HepG2 (cell line): ENCODE measurements at regions of chr11 and their contacts with region 1.

Region 1: DNA sequence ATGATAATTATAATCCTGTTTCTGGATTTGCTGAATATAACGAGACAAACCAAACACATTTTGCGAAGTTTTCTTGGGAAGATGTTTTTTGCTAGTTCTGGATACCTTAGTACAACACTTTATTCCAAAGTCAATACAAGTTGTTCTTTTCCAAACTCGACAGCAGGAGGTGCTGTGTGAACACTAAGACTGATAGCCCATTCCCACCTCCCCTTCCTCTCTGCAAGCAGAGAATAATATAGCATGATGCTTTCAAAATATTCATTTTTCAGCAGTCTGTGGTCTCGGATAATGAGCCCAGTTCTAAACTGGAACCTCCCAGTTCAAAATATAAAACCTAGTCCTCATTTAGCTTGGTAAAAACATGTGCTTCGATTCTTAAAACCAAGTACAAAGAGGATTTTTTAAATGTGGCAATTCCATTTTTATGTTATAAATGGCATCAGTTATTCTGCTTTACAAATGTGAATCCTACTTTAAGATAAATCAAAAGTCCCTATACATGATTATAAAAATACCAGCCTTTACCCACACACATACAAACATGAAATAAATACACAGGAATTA is 129.1 kb downstream of the DCDC1 start:
- DNase-seq: peak; percentile 59
- ATAC-seq: peak; percentile 85
- H3K4me3 ChIP-seq: no peak overlapping the region
- H3K27ac ChIP-seq: no peak overlapping the region
- H3K4me1 ChIP-seq: no peaks in the 10 kb centered on the region
- H3K27me3 ChIP-seq: no peaks in the 10 kb centered on the region
- CTCF ChIP-seq: peak; percentile 76
- EP300 ChIP-seq: no peak
- POLR2A ChIP-seq: no peak
- RAD21 ChIP-seq: no peak

Region 2: DNA sequence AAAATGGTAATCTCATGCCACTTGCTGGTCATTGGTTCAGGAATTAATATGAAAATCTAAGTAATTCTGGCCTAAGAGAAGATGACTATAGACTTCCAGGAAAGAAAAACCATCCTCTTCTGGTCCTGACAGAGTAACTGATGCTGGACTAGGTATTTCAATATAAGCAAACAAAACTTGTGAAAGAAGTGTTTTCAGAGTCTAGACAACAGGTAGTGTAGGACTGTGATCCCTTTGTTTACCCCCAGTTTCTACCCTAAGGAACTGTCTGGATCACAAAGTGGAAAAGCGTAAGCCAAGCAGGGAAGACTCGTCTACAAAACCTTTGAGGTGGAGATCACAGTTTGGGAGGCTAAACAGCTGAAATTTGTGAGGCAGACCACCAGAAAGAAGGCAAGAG is 947.9 kb before region 1 on chr11:
- CTCF ChIA-PET with region 1: no interaction called
- POLR2A ChIA-PET with region 1: no interaction called
- in situ Hi-C with region 1: no loop called
- intact Hi-C with region 1: loop called (anchors 5 kb)
- DNase-seq: peak; percentile 70
- ATAC-seq: peak; percentile 94
- H3K4me3 ChIP-seq: no peak overlapping the region
- H3K27ac ChIP-seq: no peak overlapping the region
- H3K4me1 ChIP-seq: peaks cover 5% of the 10 kb centered on the region
- H3K27me3 ChIP-seq: no peaks in the 10 kb centered on the region
- CTCF ChIP-seq: no peak
- EP300 ChIP-seq: peak in 1 of 2 experiments; percentile 49; a peak in 2 of 4 replicates
- POLR2A ChIP-seq: no peak
- RAD21 ChIP-seq: no peak

Region 3: DNA sequence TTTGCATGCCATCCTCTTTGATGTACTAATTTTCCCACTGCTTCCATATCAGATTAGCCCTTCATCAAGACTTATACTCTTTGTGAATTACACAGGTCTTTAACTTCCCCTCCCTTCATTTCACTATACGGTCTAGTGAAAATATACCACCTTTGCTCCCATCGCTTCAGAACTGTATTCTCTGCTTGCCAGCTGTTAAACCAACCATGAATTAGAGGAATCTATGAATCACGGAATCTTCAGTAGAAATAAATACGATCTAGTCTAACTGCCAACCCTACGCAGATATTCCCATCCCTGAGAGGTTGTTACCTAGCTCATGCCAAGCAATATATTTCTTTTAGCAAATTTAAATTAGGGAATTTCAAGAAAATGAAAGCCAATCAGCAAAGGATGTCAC is 476.5 kb before region 1 on chr11:
- CTCF ChIA-PET with region 1: no interaction called
- POLR2A ChIA-PET with region 1: no interaction called
- in situ Hi-C with region 1: no loop called
- intact Hi-C with region 1: no loop called
- DNase-seq: no peak
- ATAC-seq: no peak
- H3K4me3 ChIP-seq: no peak overlapping the region
- H3K27ac ChIP-seq: no peak overlapping the region
- H3K4me1 ChIP-seq: no peaks in the 10 kb centered on the region
- H3K27me3 ChIP-seq: no peaks in the 10 kb centered on the region
- CTCF ChIP-seq: no peak
- EP300 ChIP-seq: no peak
- POLR2A ChIP-seq: no peak
- RAD21 ChIP-seq: no peak

Region 4: GRCh38 chr11:31199378-31199777 is 41.0 kb before region 1 on chr11:
- CTCF ChIA-PET with region 1: no interaction called
- POLR2A ChIA-PET with region 1: no interaction called
- in situ Hi-C with region 1: no loop called
- intact Hi-C with region 1: no loop called
- DNase-seq: no peak
- ATAC-seq: no peak
- H3K4me3 ChIP-seq: no peak overlapping the region
- H3K27ac ChIP-seq: no peak overlapping the region
- H3K4me1 ChIP-seq: no peaks in the 10 kb centered on the region
- H3K27me3 ChIP-seq: no peaks in the 10 kb centered on the region
- CTCF ChIP-seq: no peak
- EP300 ChIP-seq: no peak
- POLR2A ChIP-seq: no peak
- RAD21 ChIP-seq: no peak

Region 5: DNA sequence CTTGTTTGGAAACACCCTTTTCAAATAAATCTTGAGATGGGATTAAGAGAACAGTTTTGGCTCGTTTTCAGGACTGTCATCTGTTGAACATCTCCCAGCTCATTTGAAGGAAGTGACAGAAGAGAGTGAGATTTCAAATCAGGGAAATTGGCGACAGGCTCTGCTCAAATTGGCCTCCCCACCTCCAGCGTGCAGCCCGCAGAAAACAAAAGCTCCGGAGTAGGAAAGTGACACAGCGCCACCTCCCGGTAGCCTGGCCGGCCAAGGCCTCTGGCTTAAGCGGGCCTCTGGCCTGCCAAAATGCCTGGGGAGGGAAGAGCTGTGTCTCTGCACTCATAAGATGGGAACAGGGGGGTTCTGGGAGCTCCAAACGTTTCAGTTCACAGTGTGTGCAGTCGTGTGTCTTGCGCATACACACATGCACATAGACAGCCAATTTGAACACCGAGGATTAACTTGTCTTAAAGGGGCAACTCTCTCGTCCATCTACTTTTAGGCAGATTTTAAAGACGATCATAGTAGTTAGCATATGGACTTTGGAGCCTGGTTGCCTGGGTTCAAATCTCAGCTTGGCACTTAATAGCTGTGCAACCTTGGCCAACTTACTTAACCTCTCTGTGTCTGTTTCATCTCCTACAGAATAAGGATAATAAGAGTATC is 717.8 kb after region 1 on chr11:
- CTCF ChIA-PET with region 1: interaction called, 3 read pairs
- POLR2A ChIA-PET with region 1: no interaction called
- in situ Hi-C with region 1: loop called (anchors 25 kb)
- intact Hi-C with region 1: loop called (anchors 1 kb)
- DNase-seq: peak; percentile 15
- ATAC-seq: peak; percentile 95
- H3K4me3 ChIP-seq: no peak overlapping the region
- H3K27ac ChIP-seq: no peak overlapping the region
- H3K4me1 ChIP-seq: no peaks in the 10 kb centered on the region
- H3K27me3 ChIP-seq: peaks cover 0 to 13% of the 10 kb centered on the region in 2 experiments; a peak in 1 of 5 replicates
- CTCF ChIP-seq: peak; percentile 76
- EP300 ChIP-seq: no peak
- POLR2A ChIP-seq: no peak
- RAD21 ChIP-seq: peak; percentile 62

Region 6: DNA sequence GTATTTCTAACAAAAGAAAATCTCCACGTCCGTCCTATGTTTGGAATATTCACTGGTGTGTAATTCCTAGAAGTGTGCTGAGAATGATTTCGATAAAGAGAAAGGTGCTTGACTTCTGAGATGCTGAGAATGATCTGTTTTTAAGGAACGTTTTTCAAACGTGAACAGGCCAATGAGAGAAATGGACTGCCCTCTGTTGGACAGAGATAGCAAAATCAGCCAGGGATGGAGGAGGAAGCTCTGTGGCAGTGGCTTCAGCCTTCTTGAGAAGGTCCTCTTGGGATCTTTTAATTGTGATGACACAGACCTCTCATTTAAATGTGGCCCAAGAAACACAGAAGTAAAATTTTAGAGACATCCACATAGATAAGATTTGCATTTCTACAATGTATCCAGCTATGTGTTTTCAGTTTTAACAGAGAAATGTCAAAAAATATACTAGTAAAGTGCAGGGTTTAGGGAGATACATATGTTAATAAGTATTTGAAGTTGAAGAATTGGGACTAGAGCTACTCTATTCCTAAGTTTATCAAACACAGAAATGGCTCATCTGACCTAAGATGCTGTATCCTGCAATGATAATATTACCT is 766.5 kb after region 1 on chr11:
- CTCF ChIA-PET with region 1: no interaction called
- POLR2A ChIA-PET with region 1: no interaction called
- in situ Hi-C with region 1: no loop called
- intact Hi-C with region 1: loop called (anchors 1 kb)
- DNase-seq: peak; percentile 13
- ATAC-seq: peak; percentile 70
- H3K4me3 ChIP-seq: no peak overlapping the region
- H3K27ac ChIP-seq: no peak overlapping the region
- H3K4me1 ChIP-seq: no peaks in the 10 kb centered on the region
- H3K27me3 ChIP-seq: peaks cover 0 to 12% of the 10 kb centered on the region in 2 experiments; a peak in 2 of 5 replicates
- CTCF ChIP-seq: peak; percentile 72
- EP300 ChIP-seq: no peak
- POLR2A ChIP-seq: no peak
- RAD21 ChIP-seq: no peak

Region 7: DNA sequence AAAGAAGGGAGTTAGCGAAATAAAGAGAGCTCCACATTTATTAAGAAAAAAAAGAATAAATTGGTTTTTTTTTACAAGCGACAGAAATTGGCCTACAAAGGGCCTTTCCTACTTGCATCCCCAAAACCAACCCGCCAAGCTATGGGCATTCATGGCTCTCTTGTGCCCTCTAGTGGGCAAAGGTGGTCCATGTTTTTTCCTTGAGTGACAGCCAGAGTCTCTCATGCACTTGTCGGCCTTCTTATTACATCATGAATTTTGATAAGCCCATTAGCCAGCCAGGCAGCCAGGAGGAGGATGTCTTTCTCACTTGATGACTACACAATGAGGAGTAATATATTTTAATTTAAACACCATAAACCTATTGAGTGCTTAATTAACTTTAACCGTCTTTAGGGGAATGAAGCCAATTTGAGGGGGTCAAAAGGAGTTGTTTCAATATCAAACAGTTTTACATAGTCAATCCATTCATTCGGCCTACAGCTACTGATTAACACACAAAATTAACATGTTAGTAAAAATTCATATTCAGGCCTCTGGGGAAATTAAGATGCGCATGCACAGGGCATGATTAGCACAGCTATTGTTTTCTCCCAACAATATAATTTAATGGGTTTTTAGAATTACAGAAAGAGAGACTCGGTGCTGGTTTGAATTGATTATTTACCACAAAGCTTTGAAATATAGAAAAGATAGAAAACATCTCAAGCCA is 936.0 kb after region 1 on chr11:
- CTCF ChIA-PET with region 1: no interaction called
- POLR2A ChIA-PET with region 1: no interaction called
- in situ Hi-C with region 1: loop called (anchors 25 kb)
- intact Hi-C with region 1: no loop called
- DNase-seq: peak; percentile 69
- ATAC-seq: peak; percentile 81
- H3K4me3 ChIP-seq: no peak overlapping the region
- H3K27ac ChIP-seq: no peak overlapping the region
- H3K4me1 ChIP-seq: no peaks in the 10 kb centered on the region
- H3K27me3 ChIP-seq: peaks cover 0 to 19% of the 10 kb centered on the region in 2 experiments; a peak in 4 of 5 replicates
- CTCF ChIP-seq: peak; percentile 84
- EP300 ChIP-seq: no peak
- POLR2A ChIP-seq: no peak
- RAD21 ChIP-seq: peak; percentile 70